ENCODE measurements at regions of chr6 and their contacts with region 1.

Region 1: DNA sequence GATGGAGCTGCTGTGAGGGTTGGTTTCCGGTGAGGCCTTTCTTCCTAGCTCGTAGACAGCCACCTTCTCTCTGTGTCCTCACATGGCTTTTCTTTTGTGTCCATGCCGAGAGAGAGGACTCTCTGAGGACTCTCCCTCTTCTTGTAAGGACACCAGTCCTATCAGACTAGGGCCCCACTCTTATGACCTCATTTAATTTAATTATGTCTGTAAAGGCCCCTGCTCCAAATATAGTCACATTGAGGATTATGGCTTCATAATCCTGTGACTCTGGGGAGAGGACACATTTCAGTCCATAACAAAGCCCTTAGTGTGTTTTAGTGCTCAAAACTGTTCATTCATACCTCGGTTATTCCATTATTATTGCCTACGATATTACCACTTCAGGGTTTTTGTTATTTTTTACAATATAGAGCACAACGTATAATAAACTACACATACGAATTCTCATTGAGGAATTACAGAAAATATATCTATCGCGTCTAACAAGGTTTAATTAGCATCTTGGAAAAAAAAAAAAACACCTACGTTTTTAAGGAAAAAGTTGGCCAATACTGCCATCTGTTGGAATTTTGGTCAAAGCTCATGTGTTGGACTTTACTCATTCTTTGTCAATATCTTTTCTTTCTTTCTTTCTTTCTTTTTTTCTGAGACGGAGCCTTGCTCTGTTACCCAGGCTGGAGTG is 20.0 kb upstream of the TFAP2A start:
- DNase-seq: no peak
- ATAC-seq: no peak
- H3K4me3 ChIP-seq: no peak overlapping the region
- H3K4me3 Mint-ChIP-seq: no peak overlapping the region
- H3K27ac ChIP-seq: no peak overlapping the region
- H3K27ac Mint-ChIP-seq: no peak overlapping the region
- H3K4me1 ChIP-seq: no peaks in the 10 kb centered on the region
- H3K4me1 Mint-ChIP-seq: peaks cover 0 to 21% (median 5%) of the 10 kb centered on the region in 7 donors
- H3K27me3 ChIP-seq: no peaks in the 10 kb centered on the region
- H3K27me3 Mint-ChIP-seq: peaks cover 5 to 32% (median 28%) of the 10 kb centered on the region in 5 donors

Region 2: GRCh38 chr6:8983188-8983688 is 1451.6 kb before region 1 on chr6:
- CTCF ChIA-PET with region 1: interaction called, 3 read pairs
- POLR2A ChIA-PET with region 1: no interaction called
- intact Hi-C with region 1: loop called (anchors 1 kb)
- DNase-seq: peak; percentile 12 to 57 (median 35)
- ATAC-seq: peak; percentile 91
- H3K4me3 ChIP-seq: no peak overlapping the region
- H3K4me3 Mint-ChIP-seq: peak overlapping the region in 2 of 10 donors; percentile 15 to 44
- H3K27ac ChIP-seq: no peak overlapping the region
- H3K27ac Mint-ChIP-seq: no peak overlapping the region
- H3K4me1 ChIP-seq: no peaks in the 10 kb centered on the region
- H3K4me1 Mint-ChIP-seq: peaks cover 0 to 2% (median 0%) of the 10 kb centered on the region in 7 donors
- H3K27me3 ChIP-seq: no peaks in the 10 kb centered on the region
- H3K27me3 Mint-ChIP-seq: peaks cover 6 to 39% (median 28%) of the 10 kb centered on the region in 5 donors

Region 3: GRCh38 chr6:10030942-10031537 is 403.8 kb before region 1 on chr6:
- CTCF ChIA-PET with region 1: no interaction called
- POLR2A ChIA-PET with region 1: no interaction called
- intact Hi-C with region 1: loop called (anchors 1 to 5 kb)
- DNase-seq: no peak
- ATAC-seq: no peak
- H3K4me3 ChIP-seq: no peak overlapping the region
- H3K4me3 Mint-ChIP-seq: no peak overlapping the region
- H3K27ac ChIP-seq: no peak overlapping the region
- H3K27ac Mint-ChIP-seq: no peak overlapping the region
- H3K4me1 ChIP-seq: no peaks in the 10 kb centered on the region
- H3K4me1 Mint-ChIP-seq: no peaks in the 10 kb centered on the region
- H3K27me3 ChIP-seq: no peaks in the 10 kb centered on the region
- H3K27me3 Mint-ChIP-seq: peaks cover 0 to 7% (median 3%) of the 10 kb centered on the region in 5 donors

Region 4: GRCh38 chr6:10451828-10452509 is 17.1 kb after region 1 on chr6:
- CTCF ChIA-PET with region 1: no interaction called
- POLR2A ChIA-PET with region 1: no interaction called
- intact Hi-C with region 1: no loop called
- DNase-seq: no peak
- ATAC-seq: no peak
- H3K4me3 ChIP-seq: no peak overlapping the region
- H3K4me3 Mint-ChIP-seq: no peak overlapping the region
- H3K27ac ChIP-seq: no peak overlapping the region
- H3K27ac Mint-ChIP-seq: no peak overlapping the region
- H3K4me1 ChIP-seq: no peaks in the 10 kb centered on the region
- H3K4me1 Mint-ChIP-seq: no peaks in the 10 kb centered on the region
- H3K27me3 ChIP-seq: no peaks in the 10 kb centered on the region
- H3K27me3 Mint-ChIP-seq: peaks cover 5 to 36% (median 18%) of the 10 kb centered on the region in 5 donors

Measured in naive thymus-derived CD4-positive, alpha-beta T cell (primary cell).